AG04449 (cell line): ENCODE measurements at regions of chr4 and their contacts with region 1.

Region 1: GRCh38 chr4:139153420-139154133 is 23.4 kb downstream of the ELF2 start:
- DNase-seq: no peak
- H3K4me3 ChIP-seq: no peak overlapping the region
- CTCF ChIP-seq: no peak

Region 2: DNA sequence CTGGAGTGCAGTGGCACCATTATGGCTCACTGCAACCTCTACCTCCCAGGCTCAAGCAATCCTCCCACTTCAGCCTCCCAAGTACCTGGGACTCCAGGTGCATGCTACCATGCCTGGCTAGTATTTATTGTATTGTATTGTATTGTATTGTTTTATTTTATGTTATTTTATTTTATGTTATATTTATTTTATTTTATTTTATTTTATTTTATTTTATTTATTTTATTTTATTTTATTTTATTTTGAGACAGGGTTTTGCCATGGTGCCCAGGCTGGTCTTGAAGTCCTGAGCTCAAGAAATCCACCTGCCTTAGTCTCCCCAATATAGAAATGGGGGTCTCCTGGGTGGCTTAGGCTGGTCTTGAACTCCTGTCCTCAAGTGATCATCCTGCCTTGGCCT is 19.2 kb before region 1 on chr4:
- CTCF ChIA-PET with region 1: no interaction called
- POLR2A ChIA-PET with region 1: no interaction called
- DNase-seq: no peak
- H3K4me3 ChIP-seq: no peak overlapping the region
- CTCF ChIP-seq: no peak

Region 3: GRCh38 chr4:139167774-139168444 is 14.3 kb after region 1 on chr4:
- CTCF ChIA-PET with region 1: interaction called, 15 read pairs
- POLR2A ChIA-PET with region 1: no interaction called
- DNase-seq: no peak
- H3K4me3 ChIP-seq: no peak overlapping the region
- CTCF ChIP-seq: peak; percentile 39

Region 4: GRCh38 chr4:139887962-139888735 is 734.6 kb after region 1 on chr4:
- CTCF ChIA-PET with region 1: no interaction called
- POLR2A ChIA-PET with region 1: no interaction called
- DNase-seq: no peak
- H3K4me3 ChIP-seq: no peak overlapping the region
- CTCF ChIP-seq: no peak